ENCODE measurements at regions of chr1 and their contacts with region 1.

Region 1: DNA sequence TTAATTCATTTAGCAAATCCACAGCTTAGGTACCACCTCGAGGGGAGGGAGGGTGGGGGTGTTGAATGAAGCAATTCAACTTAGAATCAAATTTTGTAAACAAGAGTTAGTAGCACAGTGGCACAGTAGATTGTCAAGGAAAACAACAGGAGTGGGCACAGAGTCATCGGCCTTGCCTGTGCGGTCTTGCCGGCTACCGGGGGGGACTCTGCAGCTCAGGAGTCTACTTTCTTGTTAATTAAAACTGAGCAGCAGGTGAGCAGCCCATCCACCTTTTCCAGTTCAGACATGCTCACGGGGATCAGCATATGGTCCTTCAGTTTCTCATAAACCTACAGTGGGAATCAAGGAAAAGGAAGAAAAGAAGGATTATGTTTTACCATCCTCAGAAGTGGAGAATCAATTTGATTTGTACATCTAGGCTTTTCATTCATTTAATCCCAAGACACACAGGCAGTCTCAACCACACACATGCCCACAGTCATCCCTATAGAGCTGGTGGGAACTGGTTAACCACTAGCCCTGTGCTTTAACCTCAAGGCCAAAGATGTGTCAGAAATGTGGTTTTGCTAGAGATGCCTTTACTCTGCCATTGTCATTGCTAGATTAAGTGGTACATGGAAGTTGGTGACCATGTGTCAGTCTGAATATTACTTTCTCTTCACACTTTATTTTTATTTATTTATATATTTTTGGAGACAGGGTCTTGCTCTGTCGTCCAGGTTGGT is 45.0 kb upstream of the BCL10 start:
- DNase-seq: peak; percentile 35
- H3K4me3 ChIP-seq: no peak overlapping the region
- H3K27ac ChIP-seq: peak overlapping the region; percentile 100
- H3K4me1 ChIP-seq: peaks cover 79% of the 10 kb centered on the region
- H3K27me3 ChIP-seq: no peaks in the 10 kb centered on the region
- CTCF ChIP-seq: no peak
- POLR2A ChIP-seq: peak; percentile 36

Region 2: GRCh38 chr1:85374160-85374559 is 52.8 kb after region 1 on chr1:
- CTCF ChIA-PET with region 1: no interaction called
- POLR2A ChIA-PET with region 1: no interaction called
- dilution Hi-C with region 1: no loop called
- intact Hi-C with region 1: no loop called
- DNase-seq: peak; percentile 50
- H3K4me3 ChIP-seq: no peak overlapping the region
- H3K27ac ChIP-seq: no peak overlapping the region
- H3K4me1 ChIP-seq: peaks cover 31% of the 10 kb centered on the region
- H3K27me3 ChIP-seq: no peaks in the 10 kb centered on the region
- CTCF ChIP-seq: no peak
- POLR2A ChIP-seq: no peak

Region 3: GRCh38 chr1:85494074-85494903 is 172.9 kb after region 1 on chr1:
- CTCF ChIA-PET with region 1: no interaction called
- POLR2A ChIA-PET with region 1: no interaction called
- dilution Hi-C with region 1: no loop called
- intact Hi-C with region 1: no loop called
- DNase-seq: no peak
- H3K4me3 ChIP-seq: no peak overlapping the region
- H3K27ac ChIP-seq: no peak overlapping the region
- H3K4me1 ChIP-seq: peaks cover 5% of the 10 kb centered on the region
- H3K27me3 ChIP-seq: no peaks in the 10 kb centered on the region
- CTCF ChIP-seq: no peak
- POLR2A ChIP-seq: no peak

Region 4: DNA sequence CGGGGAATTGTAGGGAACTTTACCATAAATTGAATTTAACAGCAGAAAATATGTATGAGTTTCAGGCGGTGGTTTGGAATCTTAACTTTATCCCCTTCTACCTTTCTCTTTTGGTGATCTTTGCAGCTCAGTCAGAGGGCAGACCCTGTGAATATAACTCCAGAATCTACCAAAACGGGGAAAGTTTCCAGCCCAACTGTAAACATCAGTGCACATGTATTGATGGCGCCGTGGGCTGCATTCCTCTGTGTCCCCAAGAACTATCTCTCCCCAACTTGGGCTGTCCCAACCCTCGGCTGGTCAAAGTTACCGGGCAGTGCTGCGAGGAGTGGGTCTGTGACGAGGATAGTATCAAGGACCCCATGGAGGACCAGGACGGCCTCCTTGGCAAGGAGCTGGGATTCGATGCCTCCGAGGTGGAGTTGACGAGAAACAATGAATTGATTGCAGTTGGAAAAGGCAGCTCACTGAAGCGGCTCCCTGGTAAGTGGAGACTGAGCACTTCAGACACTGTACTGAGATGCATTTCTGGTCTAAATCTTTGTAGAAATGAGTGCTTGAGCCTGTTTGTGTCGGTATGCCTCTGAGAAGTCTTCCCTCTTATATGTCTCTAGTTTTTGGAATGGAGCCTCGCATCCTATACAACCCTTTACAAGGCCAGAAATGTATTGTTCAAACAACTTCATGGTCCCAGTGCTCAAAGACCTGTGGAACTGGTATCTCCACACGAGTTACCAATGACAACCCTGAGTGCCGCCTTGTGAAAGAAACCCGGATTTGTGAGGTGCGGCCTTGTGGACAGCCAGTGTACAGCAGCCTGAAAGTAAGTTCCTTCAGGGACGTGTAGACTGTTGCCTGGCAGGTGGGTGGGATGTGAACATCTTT is 260.6 kb after region 1 on chr1:
- CTCF ChIA-PET with region 1: interaction called, 3 read pairs
- POLR2A ChIA-PET with region 1: interaction called, 10 read pairs
- dilution Hi-C with region 1: no loop called
- intact Hi-C with region 1: no loop called
- DNase-seq: peak; percentile 54
- H3K4me3 ChIP-seq: peak overlapping the region; percentile 57 to 98 (median 78)
- H3K27ac ChIP-seq: peak overlapping the region; percentile 92
- H3K4me1 ChIP-seq: peaks cover 16% of the 10 kb centered on the region
- H3K27me3 ChIP-seq: no peaks in the 10 kb centered on the region
- CTCF ChIP-seq: peak in 1 of 2 donors; percentile 7
- POLR2A ChIP-seq: peak; percentile 45